ENCODE measurements at regions of chr12 and their contacts with region 1.

Region 1: DNA sequence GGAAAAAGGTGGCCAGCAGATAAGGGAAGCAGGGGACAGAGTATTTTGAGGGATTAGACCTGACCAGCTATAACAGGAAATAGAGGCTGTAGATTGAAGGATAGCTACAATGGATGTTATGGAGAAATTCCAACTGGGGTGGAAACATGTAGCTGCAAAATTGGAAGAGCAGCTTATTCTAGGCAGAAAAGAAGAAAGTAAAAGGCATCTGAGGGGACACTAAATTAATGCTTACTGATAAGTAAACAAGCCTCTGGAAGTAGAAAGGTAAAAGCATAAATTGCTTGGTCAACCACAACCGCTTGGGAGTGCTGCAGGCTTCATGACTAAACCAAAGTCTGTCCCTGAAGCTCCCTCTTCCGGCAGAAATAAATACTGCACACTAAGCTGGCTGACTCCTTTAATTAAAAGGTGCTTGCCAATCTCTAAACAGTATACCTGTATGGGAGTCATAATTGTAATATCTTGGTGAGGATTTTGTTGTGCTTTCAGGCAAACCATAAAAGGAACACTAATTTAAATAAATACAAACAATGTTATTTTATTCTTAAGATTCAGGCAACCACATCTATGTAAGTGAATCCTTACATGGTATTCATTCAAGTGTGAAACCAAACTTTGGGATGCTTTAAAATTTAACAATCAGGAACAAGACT is 7.7 kb downstream of the UBC start:
- DNase-seq: peak; percentile 76
- H3K4me3 ChIP-seq: no peak overlapping the region
- H3K27ac ChIP-seq: no peak overlapping the region
- H3K27me3 ChIP-seq: no peaks in the 10 kb centered on the region
- CTCF ChIP-seq: peak; percentile 99

Region 2: GRCh38 chr12:124053851-124054250 is 852.9 kb before region 1 on chr12:
- CTCF ChIA-PET with region 1: interaction called, 12 read pairs
- POLR2A ChIA-PET with region 1: no interaction called
- DNase-seq: peak; percentile 18
- H3K4me3 ChIP-seq: no peak overlapping the region
- H3K27ac ChIP-seq: no peak overlapping the region
- H3K27me3 ChIP-seq: no peaks in the 10 kb centered on the region
- CTCF ChIP-seq: peak; percentile 63

Region 3: DNA sequence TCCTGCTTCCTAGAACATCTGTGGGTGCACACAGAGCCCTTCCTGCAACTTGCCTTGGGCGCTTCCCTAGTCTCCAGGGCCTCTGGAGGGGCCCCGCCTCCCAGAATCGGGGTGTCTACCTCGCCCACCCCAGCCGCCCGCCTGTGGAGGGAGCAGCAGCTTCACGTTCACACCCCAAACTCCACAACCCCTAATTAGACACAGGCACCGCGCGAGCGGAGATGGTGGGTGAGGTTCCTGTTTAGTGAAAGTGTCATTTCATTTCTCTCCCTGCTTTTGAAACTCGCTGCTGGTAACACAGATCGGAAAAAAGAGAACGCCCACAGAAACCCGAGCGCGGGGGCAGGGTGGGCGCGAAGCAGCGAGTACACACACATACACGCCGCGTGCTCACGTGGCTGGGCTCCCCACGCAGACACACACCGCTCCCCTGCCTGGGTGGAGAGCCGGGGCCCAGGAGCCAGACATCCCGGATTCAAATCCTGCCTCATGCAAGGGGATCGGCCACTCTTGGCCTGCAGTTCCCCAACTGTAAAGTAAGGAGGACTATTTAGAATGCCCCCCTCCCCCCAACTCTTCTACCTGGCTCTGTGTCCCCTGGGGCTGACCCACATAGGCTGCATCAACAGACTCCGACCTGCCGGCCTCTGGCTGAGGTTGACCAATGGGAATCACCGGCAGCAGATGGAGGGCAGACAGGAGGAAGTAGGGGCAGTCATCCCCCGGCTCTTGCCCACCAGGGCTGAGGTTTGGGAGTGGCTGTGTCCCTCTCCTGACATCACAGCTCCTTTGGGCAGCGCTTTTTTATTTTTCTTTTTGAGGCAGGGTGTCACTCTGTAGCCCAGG is 260.1 kb before region 1 on chr12:
- CTCF ChIA-PET with region 1: no interaction called
- POLR2A ChIA-PET with region 1: no interaction called
- DNase-seq: no peak
- H3K4me3 ChIP-seq: no peak overlapping the region
- H3K27ac ChIP-seq: no peak overlapping the region
- H3K27me3 ChIP-seq: peaks cover 7% of the 10 kb centered on the region
- CTCF ChIP-seq: no peak

Region 4: DNA sequence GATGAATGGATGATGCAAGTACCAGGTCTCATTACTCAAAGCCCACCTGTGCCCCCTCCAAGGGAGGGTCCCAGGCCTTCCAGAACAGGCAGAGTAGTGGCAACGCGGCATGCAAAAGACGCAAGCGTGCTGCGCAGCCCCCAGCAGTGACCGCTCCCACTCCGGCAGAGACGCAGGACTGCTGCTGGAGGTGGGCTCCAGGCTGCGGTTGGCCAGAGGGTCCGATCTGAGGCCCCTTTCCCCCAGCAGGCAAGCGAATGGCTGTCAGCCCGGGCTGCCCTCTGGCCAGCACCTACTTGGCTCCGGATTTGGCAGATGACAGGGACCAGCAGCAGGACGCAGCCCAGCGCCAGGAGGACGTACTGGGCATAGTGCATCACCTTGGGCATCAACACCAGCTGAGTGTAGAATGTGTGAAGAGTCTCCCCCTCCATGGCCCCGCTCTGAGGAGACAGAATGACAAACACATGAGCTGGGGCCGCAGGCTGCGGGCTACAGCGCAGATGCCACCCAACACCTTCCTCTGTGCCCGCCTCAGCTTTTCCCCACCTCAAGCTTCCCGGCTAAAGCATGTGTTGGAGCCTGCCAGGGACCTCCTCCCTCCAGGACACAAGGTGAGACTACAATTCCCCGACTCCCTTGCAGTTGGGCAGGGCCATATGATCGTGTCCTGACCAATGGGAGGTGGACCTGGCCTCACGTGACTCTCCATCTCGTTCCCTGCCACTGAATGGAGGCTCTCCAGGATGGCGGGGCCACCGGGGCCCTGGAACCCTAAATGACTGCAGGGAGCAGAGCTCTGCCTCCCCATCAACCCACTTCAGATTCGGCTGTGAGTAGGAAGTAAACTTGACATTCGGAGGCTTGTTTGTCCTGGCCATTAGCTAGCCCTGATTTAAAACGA is 120.4 kb before region 1 on chr12:
- CTCF ChIA-PET with region 1: interaction called, 15 read pairs
- POLR2A ChIA-PET with region 1: no interaction called
- DNase-seq: peak; percentile 76
- H3K4me3 ChIP-seq: peak overlapping the region; percentile 66
- H3K27ac ChIP-seq: no peak overlapping the region
- H3K27me3 ChIP-seq: no peaks in the 10 kb centered on the region
- CTCF ChIP-seq: no peak

Region 5: DNA sequence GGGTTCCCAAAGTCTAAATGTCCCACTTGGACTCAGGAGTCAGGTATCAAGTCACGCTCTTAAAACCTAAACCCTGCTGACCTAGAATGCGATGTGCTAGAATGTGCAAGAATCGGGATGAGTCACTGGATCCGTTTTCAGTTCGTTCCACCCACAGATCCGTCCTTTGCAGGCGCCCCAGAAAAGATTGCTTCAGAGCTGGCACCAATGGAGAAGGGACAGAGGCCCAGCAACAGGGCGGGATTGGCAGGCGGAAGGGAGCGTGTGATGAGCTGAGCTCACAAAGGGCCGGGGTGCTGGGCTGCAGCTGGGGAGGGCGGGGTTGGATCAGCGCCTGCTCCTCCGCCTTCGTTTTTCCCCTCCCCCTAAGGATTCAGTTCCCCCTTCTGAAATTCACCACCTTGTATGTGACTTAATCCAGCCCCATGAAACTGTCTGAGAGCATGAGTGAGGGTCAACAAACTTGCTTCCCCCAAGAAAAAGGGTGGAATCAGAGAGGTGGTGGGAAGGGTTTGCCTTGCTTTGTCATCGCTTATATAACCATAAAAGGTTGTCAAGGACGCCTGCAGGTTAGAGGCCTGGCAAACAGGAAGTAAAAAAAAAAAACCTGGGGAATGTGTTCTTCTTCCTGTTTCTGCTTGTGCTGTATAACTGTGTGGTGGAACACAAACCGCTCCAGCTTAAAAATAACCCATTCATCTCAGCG is 10.6 kb after region 1 on chr12:
- CTCF ChIA-PET with region 1: interaction called, 45 read pairs
- POLR2A ChIA-PET with region 1: interaction called, 22 read pairs
- DNase-seq: peak; percentile 99
- H3K4me3 ChIP-seq: peak overlapping the region; percentile 100
- H3K27ac ChIP-seq: peak overlapping the region; percentile 99
- H3K27me3 ChIP-seq: no peaks in the 10 kb centered on the region
- CTCF ChIP-seq: no peak

Region 6: DNA sequence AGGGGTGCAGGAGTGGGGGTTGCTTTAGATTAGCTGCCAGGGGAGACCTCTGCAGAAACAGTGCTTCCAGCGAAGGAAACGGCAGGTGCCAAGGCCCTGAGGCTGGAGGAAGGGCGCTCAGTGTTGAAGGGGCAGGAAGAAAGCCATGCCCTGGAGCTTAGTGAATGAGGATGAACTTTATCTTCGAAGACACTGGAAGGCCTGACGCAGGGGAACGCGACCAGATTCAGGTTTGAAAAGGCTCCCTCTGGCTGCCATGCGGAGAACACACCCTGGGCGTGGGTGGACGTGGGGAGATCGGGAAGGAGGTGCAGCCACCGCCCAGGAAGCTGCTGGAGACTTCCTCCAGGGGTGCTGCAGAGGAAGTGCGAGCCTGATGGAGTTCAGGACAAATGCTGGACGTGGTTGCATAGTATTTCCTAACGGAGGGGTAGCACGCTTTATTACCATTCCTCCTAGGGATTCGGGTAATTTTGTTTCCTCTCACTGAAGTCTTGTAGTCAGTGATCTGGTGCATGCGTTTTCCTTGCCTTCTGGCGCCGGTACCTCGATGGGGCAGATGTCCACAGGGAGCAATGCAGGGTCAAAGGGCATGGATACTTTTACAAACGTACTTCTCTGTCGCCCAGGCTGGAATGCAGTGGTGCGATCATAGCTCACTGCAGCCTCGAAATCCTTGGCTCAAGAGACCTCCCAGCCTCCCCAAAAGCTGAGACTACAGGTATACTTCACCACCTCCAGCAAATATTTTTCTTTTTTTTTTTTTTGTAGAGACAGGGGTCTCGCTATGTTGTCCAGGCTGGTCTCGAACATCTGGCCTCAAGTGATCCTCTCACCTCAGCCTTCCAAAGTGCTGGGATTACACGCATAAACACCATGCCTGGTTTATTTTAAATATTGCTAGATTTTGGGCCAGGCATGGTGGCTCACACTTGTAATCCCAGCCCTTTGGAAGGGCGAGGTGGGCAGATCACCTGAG is 34.1 kb after region 1 on chr12:
- CTCF ChIA-PET with region 1: interaction called, 83 read pairs
- POLR2A ChIA-PET with region 1: interaction called, 8 read pairs
- DNase-seq: peak; percentile 74
- H3K4me3 ChIP-seq: peak overlapping the region; percentile 52
- H3K27ac ChIP-seq: peak overlapping the region; percentile 89
- H3K27me3 ChIP-seq: no peaks in the 10 kb centered on the region
- CTCF ChIP-seq: peak; percentile 91